Activated naive CD4-positive, alpha-beta T cell treated with anti-CD3 and anti-CD28 coated beads for 36 hours (primary cell): ENCODE measurements at regions of chr2 and their contacts with region 1.

Region 1: DNA sequence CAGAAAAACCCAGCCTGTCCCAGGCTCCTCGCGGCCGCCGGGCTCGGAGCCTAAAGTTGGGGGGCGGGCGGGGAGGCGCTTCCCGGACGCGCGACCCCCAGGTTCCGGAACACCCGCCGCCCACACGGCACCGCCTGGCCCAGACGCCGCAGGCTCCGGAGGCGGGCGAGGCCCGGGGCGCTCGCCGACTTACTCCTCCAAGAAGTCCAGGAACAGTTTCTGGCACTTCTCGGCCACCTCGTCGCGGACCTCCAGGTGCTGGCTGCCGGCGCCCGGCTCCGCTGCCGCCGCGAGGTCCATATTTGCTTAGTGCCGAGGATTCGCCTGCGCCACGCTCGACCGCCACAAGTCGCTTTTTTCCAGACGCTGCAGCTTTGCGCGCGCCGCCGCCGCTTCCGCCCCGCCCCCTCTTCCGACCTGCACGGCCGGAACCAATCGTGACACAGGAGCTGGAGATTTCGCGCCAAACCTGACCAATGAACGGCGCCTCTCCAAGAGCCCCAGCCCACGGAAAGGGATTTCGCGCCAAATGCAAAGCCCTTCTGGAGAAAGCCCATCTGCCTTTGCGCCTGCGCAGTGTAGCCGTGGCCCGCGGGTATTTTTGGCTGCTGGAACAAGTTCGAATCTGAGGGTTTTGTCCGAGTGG is at the start of gene MCM6:
- DNase-seq: peak; percentile 100
- H3K4me3 Mint-ChIP-seq: peak within 1 kb of the TSS; percentile 91
- H3K27ac Mint-ChIP-seq: peak within 1 kb of the TSS; percentile 99
- H3K4me1 Mint-ChIP-seq: peaks cover 39% of the 10 kb centered on the region
- H3K27me3 Mint-ChIP-seq: no peaks in the 10 kb centered on the region
- total RNA-seq, gene MCM6: 221 to 226 TPM

Region 2: DNA sequence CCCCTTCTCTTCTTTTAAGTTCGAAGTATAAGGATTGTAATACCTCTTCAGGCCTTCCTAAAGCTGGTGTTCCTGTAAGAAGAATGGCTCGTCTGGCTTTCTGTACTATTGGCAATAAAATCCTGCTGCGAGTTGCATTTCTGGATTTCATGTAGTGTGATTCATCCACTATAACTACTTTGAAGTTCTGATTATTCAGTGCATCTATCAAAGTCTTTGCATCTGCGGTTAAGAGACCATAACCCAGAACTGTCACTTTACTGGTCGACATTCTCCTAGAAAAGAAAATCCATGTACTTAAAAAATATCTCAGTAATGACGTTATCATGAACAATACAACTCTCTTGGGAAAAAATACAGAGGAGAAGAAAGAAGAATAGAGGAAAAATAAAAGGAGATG is 526.2 kb before region 1 on chr2:
- CTCF ChIA-PET with region 1: no interaction called
- intact Hi-C with region 1: no loop called
- DNase-seq: no peak
- H3K4me3 Mint-ChIP-seq: no peak overlapping the region
- H3K27ac Mint-ChIP-seq: no peak overlapping the region
- H3K4me1 Mint-ChIP-seq: no peaks in the 10 kb centered on the region
- H3K27me3 Mint-ChIP-seq: no peaks in the 10 kb centered on the region

Region 3: DNA sequence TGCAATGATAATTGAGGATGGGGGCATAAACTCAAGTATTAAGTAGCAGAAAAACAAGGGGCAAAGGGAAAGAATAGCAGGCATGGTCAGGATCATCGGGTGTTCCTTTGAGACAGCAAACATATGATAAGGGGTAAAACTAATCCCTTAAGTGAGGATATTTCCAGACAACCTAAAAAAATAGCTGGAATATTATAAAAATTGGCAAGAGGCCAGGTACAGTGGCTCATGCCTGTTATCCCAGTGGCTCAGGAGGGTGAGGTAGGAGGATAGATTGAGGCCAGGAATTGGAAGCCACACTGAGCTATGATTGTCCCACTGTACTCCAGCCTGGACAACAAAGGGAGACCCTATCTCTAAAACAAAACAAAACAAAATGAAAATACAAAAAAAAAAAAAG is 484.2 kb before region 1 on chr2:
- CTCF ChIA-PET with region 1: no interaction called
- intact Hi-C with region 1: no loop called
- DNase-seq: no peak
- H3K4me3 Mint-ChIP-seq: no peak overlapping the region
- H3K27ac Mint-ChIP-seq: no peak overlapping the region
- H3K4me1 Mint-ChIP-seq: no peaks in the 10 kb centered on the region
- H3K27me3 Mint-ChIP-seq: no peaks in the 10 kb centered on the region

Region 4: GRCh38 chr2:135525786-135526185 is 350.4 kb before region 1 on chr2:
- CTCF ChIA-PET with region 1: no interaction called
- intact Hi-C with region 1: no loop called
- DNase-seq: no peak
- H3K4me3 Mint-ChIP-seq: no peak overlapping the region
- H3K27ac Mint-ChIP-seq: no peak overlapping the region
- H3K4me1 Mint-ChIP-seq: peaks cover 24% of the 10 kb centered on the region
- H3K27me3 Mint-ChIP-seq: no peaks in the 10 kb centered on the region

Region 5: DNA sequence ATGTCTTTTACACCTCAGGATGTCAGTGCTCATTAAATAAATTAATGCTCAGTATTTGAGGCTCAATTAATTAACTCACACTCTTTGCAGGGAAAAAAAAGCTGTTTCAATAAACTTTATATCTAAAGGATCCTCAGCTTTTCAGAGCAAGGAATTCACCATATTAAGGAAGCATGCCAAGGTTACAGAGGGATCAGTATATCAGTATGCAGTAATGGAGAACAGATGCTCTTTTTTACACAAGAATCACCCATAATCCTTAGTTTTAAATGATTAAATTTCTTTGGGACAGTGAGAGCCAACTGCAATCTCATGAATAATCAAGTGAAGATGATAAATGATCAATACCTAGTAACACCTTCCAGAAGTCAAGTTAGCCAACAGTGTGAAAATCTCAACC is 24.3 kb before region 1 on chr2:
- CTCF ChIA-PET with region 1: interaction called, 4 read pairs
- intact Hi-C with region 1: loop called (anchors 2 kb)
- DNase-seq: no peak
- H3K4me3 Mint-ChIP-seq: no peak overlapping the region
- H3K27ac Mint-ChIP-seq: no peak overlapping the region
- H3K4me1 Mint-ChIP-seq: peaks cover 6% of the 10 kb centered on the region
- H3K27me3 Mint-ChIP-seq: no peaks in the 10 kb centered on the region

Region 6: GRCh38 chr2:136059036-136059472 is 182.9 kb after region 1 on chr2:
- CTCF ChIA-PET with region 1: no interaction called
- intact Hi-C with region 1: loop called (anchors 2 kb)
- DNase-seq: no peak
- H3K4me3 Mint-ChIP-seq: no peak overlapping the region
- H3K27ac Mint-ChIP-seq: no peak overlapping the region
- H3K4me1 Mint-ChIP-seq: peaks cover 59% of the 10 kb centered on the region
- H3K27me3 Mint-ChIP-seq: no peaks in the 10 kb centered on the region